Activated CD4-positive, alpha-beta T cell treated with anti-CD3 and anti-CD28 coated beads, Interleukin-2, amount 10 ng/mL, durations not matched to agents 24 days and 14 days (primary cell): ENCODE measurements at regions of chr5 and their contacts with region 1.

Region 1: GRCh38 chr5:126499853-126500342 is 76.7 kb downstream of the GRAMD2B start:
- DNase-seq: peak; percentile 80
- H3K4me3 Mint-ChIP-seq: no peak overlapping the region
- H3K27ac Mint-ChIP-seq: no peak overlapping the region
- H3K4me1 Mint-ChIP-seq: peaks cover 4% of the 10 kb centered on the region
- H3K27me3 Mint-ChIP-seq: no peaks in the 10 kb centered on the region

Region 2: DNA sequence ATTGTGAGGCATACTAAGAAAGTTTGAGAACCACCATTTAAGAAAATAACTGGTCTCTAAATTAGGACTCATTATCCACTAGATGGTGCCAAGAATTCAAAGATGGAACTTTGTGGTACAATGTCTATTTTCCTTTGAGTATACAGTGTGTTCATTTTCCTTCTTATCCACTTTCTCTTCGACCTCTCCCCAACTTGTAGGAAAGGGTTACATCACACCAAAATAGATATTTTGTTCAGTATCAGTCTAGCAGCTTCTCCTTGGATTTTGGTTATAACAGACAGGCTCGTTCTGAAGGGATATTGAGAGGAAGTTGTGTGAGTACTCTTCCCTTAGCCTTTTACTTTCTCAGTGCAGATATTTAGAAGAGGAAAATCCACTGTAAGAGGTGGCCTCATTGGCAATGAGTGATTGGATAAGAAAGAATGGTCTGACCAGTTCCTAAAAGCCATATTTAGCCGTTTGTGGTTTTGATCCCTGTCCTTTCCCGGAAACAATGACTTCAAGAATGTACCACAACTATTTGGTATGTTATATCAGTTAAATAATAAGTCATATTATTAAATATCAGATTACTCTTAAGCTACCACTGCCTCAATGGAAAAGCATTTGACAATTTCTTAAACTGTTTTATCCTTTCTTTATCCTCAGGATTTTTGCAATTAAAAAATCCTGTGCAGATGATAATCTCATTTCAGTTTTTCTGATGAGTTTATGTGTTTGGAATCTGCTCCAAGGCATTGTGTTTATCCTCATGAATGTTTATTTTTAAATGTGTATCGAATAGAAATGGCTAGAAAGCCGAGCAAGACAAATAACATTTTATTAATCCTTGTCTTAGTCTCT is 145.7 kb before region 1 on chr5:
- intact Hi-C with region 1: loop called (anchors 2 kb)
- DNase-seq: no peak
- H3K4me3 Mint-ChIP-seq: no peak overlapping the region
- H3K27ac Mint-ChIP-seq: no peak overlapping the region
- H3K4me1 Mint-ChIP-seq: peaks cover 7% of the 10 kb centered on the region
- H3K27me3 Mint-ChIP-seq: peaks cover 3% of the 10 kb centered on the region